AG04449 (cell line): ENCODE measurements at regions of chr12 and their contacts with region 1.

Region 1: GRCh38 chr12:125330645-125331341 is 265.6 kb downstream of the AACS start:
- DNase-seq: no peak
- H3K4me3 ChIP-seq: peak overlapping the region; percentile 53
- CTCF ChIP-seq: peak; percentile 95

Region 2: DNA sequence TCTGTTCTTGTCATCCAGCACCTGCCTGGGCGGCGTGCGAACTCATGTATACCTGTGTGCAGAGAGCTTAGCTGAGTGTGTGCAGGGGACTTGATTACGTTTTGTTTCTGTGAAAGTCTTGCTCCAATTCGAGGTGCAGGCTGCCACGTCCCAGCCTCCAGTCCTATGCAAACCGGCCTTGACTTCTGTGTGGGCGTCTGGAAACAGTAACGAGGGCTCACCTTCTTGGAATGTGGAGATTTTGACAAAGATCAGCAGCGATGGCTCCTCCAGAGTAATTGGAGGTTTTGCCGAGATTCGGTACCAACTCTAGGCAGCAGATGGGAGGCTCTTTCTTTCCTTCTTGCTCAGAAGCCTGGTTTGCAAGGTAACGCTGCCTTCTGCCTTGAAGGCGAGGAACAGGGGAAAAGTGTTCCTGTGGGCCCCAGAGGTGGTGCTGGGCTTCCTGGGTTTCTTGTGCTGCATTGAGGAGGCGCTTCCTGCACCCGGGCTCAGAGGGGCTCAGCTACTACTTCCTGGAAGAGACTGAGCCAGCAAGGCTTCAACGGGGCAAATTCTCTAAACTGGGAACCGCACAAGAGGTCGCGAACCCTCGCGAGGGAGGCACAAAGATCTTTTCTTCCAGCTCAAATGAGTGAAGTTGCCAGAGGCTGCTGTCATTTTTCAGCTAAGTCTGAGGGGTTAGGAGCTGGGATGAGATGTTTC is 16.6 kb before region 1 on chr12:
- CTCF ChIA-PET with region 1: interaction called, 14 read pairs
- POLR2A ChIA-PET with region 1: no interaction called
- DNase-seq: no peak
- H3K4me3 ChIP-seq: no peak overlapping the region
- CTCF ChIP-seq: no peak

Region 3: DNA sequence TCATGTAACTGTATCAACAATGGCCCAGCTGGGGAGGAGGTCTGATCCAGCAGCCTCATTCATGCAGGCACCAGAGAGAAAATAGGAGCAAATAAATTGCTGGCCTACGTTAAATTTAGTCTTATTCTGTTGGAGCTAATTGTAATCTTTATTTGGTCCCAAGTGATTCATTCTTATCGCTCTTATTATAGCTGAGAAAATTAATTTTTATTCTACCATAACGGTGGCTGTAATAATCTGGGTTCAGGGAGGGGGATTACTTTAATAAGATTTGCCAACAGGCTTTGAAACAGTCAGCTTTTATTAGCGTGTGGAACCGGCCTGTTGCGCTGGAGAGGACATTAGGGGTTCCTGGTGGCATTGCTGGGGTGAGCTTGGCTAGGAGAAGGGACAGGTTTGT is 10.6 kb before region 1 on chr12:
- CTCF ChIA-PET with region 1: interaction called, 14 read pairs
- POLR2A ChIA-PET with region 1: no interaction called
- DNase-seq: no peak
- H3K4me3 ChIP-seq: no peak overlapping the region
- CTCF ChIP-seq: no peak

Region 4: GRCh38 chr12:125346362-125346761 is 15.6 kb after region 1 on chr12:
- CTCF ChIA-PET with region 1: interaction called, 22 read pairs
- POLR2A ChIA-PET with region 1: no interaction called
- DNase-seq: no peak
- H3K4me3 ChIP-seq: no peak overlapping the region
- CTCF ChIP-seq: no peak

Region 5: GRCh38 chr12:125402874-125403789 is 72.3 kb after region 1 on chr12:
- CTCF ChIA-PET with region 1: interaction called, 21 read pairs
- POLR2A ChIA-PET with region 1: no interaction called
- DNase-seq: no peak
- H3K4me3 ChIP-seq: no peak overlapping the region
- CTCF ChIP-seq: peak; percentile 22